Natural killer cell (primary cell): ENCODE measurements at regions of chr13 and their contacts with region 1.

Region 1: GRCh38 chr13:24512197-24512907 is at the start of gene PARP4:
- DNase-seq: peak; percentile 65 to 82
- ATAC-seq: peak; percentile 71 to 86 (median 80)
- H3K4me3 ChIP-seq: peak within 1 kb of the TSS; percentile 96
- H3K4me3 Mint-ChIP-seq: peak within 1 kb of the TSS; percentile 97
- H3K27ac ChIP-seq: peak within 1 kb of the TSS; percentile 93
- H3K27ac Mint-ChIP-seq: peak within 1 kb of the TSS; percentile 92
- H3K4me1 ChIP-seq: peaks cover 12% of the 10 kb centered on the region
- H3K4me1 Mint-ChIP-seq: peaks cover 37 to 54% of the 10 kb centered on the region in 2 donors
- H3K27me3 ChIP-seq: no peaks in the 10 kb centered on the region
- H3K27me3 Mint-ChIP-seq: no peaks in the 10 kb centered on the region
- CTCF ChIP-seq: no peak
- total RNA-seq, gene PARP4: 83.5 to 90.1 (median 84.0) TPM

Region 2: DNA sequence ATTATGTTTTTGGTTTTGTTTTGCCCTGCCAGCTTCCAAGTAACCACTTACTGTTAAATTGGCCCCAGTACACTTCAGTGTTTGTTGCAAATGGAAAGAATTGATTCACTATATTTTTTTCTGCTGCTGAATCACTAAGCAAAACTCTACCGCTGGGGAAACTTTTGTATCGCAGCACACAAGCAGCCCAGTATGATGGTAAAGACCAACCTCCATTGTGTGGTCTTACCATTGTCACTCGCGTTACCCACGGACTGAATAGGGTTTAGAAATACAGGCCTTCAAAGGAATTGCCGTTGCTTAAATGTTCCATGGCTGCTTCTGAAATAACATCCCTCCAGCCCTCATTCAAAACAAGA is 344.0 kb before region 1 on chr13:
- intact Hi-C with region 1: no loop called
- DNase-seq: no peak
- ATAC-seq: no peak
- H3K4me3 ChIP-seq: no peak overlapping the region
- H3K4me3 Mint-ChIP-seq: no peak overlapping the region
- H3K27ac ChIP-seq: no peak overlapping the region
- H3K27ac Mint-ChIP-seq: no peak overlapping the region
- H3K4me1 ChIP-seq: peaks cover 3% of the 10 kb centered on the region
- H3K4me1 Mint-ChIP-seq: peaks cover 0 to 9% of the 10 kb centered on the region in 2 donors
- H3K27me3 ChIP-seq: no peaks in the 10 kb centered on the region
- H3K27me3 Mint-ChIP-seq: peaks cover 3 to 13% of the 10 kb centered on the region in 2 donors
- CTCF ChIP-seq: no peak

Region 3: DNA sequence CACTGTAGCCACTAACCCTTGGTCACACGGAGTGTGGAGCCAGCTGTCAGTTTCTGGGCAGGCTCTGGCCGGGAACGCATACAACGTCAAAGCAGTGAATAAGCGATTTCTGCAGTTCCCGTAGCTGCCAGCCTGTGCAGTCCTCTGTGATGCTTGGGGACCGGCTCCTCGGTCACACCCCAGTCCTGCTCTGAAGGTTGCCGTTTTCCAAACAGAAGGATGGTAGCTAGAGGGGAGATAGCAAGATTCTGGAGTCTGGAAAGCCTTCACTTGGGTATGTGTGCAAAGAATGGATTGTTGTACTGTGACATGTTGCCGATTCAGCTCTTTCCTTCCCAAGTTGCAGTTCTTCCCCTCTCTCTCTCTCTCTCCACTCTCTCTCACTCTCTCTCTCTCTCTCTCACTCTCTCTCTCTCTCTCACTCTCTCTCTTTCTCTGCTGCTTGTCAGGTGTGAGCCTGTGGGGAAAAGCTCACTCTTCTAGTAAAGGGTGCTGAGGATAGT is 241.7 kb before region 1 on chr13:
- intact Hi-C with region 1: loop called (anchors 5 kb)
- DNase-seq: peak; percentile 63 to 82
- ATAC-seq: peak; percentile 15 to 56 (median 30)
- H3K4me3 ChIP-seq: peak overlapping the region; percentile 45
- H3K4me3 Mint-ChIP-seq: peak overlapping the region; percentile 94
- H3K27ac ChIP-seq: peak overlapping the region; percentile 96
- H3K27ac Mint-ChIP-seq: peak overlapping the region; percentile 95 to 98
- H3K4me1 ChIP-seq: peaks cover 81% of the 10 kb centered on the region
- H3K4me1 Mint-ChIP-seq: peaks cover 90 to 91% of the 10 kb centered on the region in 2 donors
- H3K27me3 ChIP-seq: no peaks in the 10 kb centered on the region
- H3K27me3 Mint-ChIP-seq: peaks cover 3 to 8% of the 10 kb centered on the region in 2 donors
- CTCF ChIP-seq: no peak

Region 4: GRCh38 chr13:24328145-24328544 is 184.2 kb before region 1 on chr13:
- intact Hi-C with region 1: no loop called
- DNase-seq: no peak
- ATAC-seq: peak in 2 of 3 donors; percentile 29 to 53
- H3K4me3 ChIP-seq: no peak overlapping the region
- H3K4me3 Mint-ChIP-seq: no peak overlapping the region
- H3K27ac ChIP-seq: no peak overlapping the region
- H3K27ac Mint-ChIP-seq: no peak overlapping the region
- H3K4me1 ChIP-seq: no peaks in the 10 kb centered on the region
- H3K4me1 Mint-ChIP-seq: no peaks in the 10 kb centered on the region
- H3K27me3 ChIP-seq: peaks cover 9% of the 10 kb centered on the region
- H3K27me3 Mint-ChIP-seq: peaks cover 35 to 57% of the 10 kb centered on the region in 2 donors
- CTCF ChIP-seq: no peak